Activated CD4-positive, alpha-beta memory T cell treated with anti-CD3 and anti-CD28 coated beads for 36 hours (primary cell): ENCODE measurements at regions of chr17 and their contacts with region 1.

Region 1: DNA sequence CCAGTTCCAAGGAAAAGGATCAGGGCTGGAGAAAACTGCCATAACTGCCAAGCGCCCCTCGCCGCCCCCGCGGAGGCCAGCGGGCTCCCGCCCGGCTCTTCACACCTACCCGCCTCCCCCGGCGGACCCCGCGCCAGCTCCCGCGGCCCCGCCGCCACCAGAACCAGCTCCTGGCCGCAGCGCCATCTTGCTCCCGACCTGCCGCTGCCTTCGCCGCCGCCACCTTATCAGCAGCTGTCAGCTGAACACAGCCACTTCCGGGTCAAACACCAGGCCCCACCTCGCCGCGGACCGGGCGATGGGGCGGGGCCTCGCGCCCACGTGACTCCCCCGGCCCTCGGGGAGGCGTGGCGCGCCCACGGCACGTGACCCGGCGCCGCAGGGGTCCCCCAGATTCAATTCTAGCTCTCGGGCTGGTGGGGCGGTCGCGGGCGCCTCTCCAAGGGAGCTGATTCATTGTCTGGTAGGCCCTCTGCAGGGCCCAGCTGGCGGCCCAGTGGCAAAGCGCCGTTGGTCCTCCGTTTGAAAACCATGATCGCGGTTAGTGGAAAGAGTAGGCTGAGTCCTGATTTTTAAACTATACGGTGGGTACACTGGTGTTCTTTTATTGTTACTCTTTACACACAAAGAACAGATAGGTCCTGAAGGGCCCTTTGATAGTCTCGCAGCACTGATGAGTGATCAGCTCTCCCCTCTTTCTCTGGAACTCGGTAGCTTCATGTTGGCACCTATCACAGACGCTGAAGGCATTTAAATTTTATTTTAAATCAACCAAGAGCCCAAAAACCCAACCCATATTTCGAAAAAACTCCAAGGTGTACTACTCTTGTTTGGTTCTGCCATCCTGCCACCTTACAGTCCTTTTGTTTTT is at the start of gene SYNRG:
- DNase-seq: peak; percentile 96
- H3K4me3 Mint-ChIP-seq: peak within 1 kb of the TSS; percentile 87
- H3K27ac Mint-ChIP-seq: peak within 1 kb of the TSS; percentile 93
- H3K4me1 Mint-ChIP-seq: peaks cover 36% of the 10 kb centered on the region
- H3K27me3 Mint-ChIP-seq: no peaks in the 10 kb centered on the region
- total RNA-seq, gene SYNRG: 44.4 to 45.2 TPM

Region 2: DNA sequence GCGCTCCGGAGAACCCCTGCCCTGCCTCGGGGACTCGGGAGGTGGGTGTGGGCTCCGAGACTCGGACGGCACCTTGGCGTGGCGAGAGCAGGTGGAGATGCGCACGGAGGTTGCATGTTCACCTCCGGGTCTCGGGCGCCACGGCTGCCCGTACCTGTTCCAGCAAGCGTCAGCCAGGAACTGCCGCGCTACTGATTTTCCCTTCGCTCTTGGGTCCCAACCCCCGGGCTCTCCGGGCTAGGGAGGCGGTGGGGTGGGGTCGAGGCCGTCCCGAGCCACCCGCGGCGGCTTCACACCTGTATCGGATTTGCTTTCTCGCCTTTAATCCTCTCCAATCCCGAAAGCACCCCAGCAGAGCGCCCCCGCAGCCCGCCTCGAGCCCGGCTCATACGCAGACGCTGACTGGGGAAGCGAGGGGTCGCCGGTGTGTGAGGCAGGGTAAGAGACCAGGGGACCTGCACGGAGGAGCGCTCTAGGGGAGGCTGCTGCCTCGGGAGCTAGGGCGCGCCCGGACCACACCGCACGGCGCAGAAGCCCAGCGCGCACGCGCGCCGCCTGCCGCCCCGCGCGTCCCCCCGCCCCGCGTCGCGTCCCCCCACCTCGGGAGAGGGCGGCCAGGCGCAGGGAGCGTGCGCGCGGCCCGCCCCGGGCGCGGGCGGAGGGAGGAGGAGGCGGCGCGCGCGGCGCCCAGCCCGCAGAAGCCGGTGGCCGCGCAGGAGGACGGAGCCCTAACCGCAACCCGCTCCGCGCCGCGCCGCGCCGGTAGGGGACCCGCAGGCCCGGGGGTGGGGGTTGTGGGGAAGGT is 120.0 kb before region 1 on chr17 and contains the start of gene DUSP14:
- CTCF ChIA-PET with region 1: no interaction called
- POLR2A ChIA-PET with region 1: interaction called, 3 read pairs
- intact Hi-C with region 1: loop called (anchors 1 kb)
- DNase-seq: peak; percentile 84
- H3K4me3 Mint-ChIP-seq: peak within 1 kb of the TSS; percentile 90
- H3K27ac Mint-ChIP-seq: peak within 1 kb of the TSS; percentile 88
- H3K4me1 Mint-ChIP-seq: peaks cover 47% of the 10 kb centered on the region
- H3K27me3 Mint-ChIP-seq: no peaks in the 10 kb centered on the region
- total RNA-seq, gene DUSP14: 17.4 to 19.0 TPM

Region 3: DNA sequence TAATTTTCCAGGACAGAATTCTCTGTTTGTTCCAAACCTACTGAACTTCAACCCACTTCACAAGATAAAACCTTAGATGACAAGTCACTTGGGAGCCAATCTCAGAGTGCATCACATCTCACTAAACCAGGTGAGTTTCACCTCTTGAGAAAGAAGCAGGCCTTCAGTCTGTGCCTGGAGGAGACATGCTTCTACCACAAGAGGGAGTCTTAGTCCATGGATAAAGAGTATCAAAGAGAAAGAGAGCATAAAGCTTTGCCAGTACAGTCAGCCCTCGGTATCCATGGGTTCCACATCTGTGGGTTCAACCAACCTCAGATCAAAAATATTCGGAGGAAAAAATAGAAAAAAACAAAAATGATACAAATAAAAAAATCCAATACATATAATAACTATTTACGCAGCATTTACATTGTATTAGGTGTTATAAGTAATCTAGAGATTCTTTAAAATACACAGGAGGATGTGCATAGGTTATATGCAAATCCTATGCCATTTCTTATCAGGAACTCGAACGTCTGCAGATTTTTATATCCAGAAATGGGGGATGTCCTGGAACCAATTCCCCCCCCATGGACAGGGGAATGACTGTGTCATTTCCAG is 82.1 kb before region 1 on chr17:
- CTCF ChIA-PET with region 1: interaction called, 13 read pairs
- POLR2A ChIA-PET with region 1: interaction called, 3 read pairs
- intact Hi-C with region 1: no loop called
- DNase-seq: peak; percentile 20
- H3K4me3 Mint-ChIP-seq: no peak overlapping the region
- H3K27ac Mint-ChIP-seq: no peak overlapping the region
- H3K4me1 Mint-ChIP-seq: no peaks in the 10 kb centered on the region
- H3K27me3 Mint-ChIP-seq: no peaks in the 10 kb centered on the region

Region 4: GRCh38 chr17:37541880-37542660 is 67.3 kb before region 1 on chr17:
- CTCF ChIA-PET with region 1: interaction called, 3 read pairs
- POLR2A ChIA-PET with region 1: no interaction called
- intact Hi-C with region 1: loop called (anchors 2 kb)
- DNase-seq: no peak
- H3K4me3 Mint-ChIP-seq: no peak overlapping the region
- H3K27ac Mint-ChIP-seq: peak overlapping the region; percentile 77
- H3K4me1 Mint-ChIP-seq: peaks cover 24% of the 10 kb centered on the region
- H3K27me3 Mint-ChIP-seq: no peaks in the 10 kb centered on the region

Region 5: GRCh38 chr17:37643118-37643766 is 33.8 kb after region 1 on chr17 and contains the start of gene DDX52:
- CTCF ChIA-PET with region 1: interaction called, 3 read pairs
- POLR2A ChIA-PET with region 1: no interaction called
- intact Hi-C with region 1: loop called (anchors 2 kb)
- DNase-seq: peak; percentile 93
- H3K4me3 Mint-ChIP-seq: peak within 1 kb of the TSS; percentile 92
- H3K27ac Mint-ChIP-seq: peak within 1 kb of the TSS; percentile 78
- H3K4me1 Mint-ChIP-seq: peaks cover 23% of the 10 kb centered on the region
- H3K27me3 Mint-ChIP-seq: peaks cover 18% of the 10 kb centered on the region
- total RNA-seq, gene DDX52: 24.9 to 26.2 TPM